Breast epithelium (tissue), 4 donors: ENCODE measurements at regions of chr1 and their contacts with region 1.

Region 1: DNA sequence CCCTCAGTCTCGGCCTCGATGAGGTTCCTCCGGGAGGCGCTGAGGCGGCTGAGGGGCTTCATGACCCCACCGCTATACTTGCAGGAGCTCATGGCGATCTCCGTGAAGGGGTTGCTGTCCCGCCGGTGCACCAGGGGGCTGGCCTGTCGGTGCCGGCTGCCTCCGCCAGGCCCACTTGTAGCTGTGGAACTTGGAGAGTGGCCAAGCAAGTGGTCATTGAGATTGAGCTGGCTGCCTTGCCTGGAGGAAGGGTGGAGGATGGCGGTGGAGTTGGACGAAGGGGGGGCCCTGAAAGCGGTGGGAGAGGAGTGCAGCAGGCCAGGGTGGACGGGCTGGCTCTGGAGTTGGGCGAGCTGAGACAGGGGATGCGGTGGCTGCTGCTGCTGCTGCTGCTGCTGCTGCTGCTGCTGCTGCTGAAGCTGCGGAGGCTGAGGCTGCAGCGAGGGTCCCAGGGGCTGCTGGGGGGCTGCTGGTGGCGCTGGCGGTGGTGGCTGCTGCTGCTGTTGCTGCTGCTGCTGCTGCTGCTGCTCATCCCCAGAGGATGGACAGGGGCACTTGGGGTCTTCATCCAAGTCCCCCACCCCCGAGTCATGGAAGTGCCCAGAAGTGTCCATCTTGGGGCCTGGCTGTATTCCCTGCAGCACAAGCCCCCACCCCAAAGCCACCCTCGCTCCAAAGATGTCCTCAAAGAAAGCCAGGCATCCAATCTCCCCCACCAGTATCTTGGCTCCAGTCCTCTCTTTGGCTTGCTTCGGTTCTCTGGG is 548 bp downstream of the KCNN3 start:
- DNase-seq: no peak
- H3K4me3 ChIP-seq: peak overlapping the region; percentile 30 to 53 (median 37)
- H3K27ac ChIP-seq: no peak overlapping the region
- H3K4me1 ChIP-seq: no peaks in the 10 kb centered on the region
- H3K27me3 ChIP-seq: peaks cover 0 to 23% of the 10 kb centered on the region in 2 donors
- CTCF ChIP-seq: no peak
- POLR2A ChIP-seq: no peak

Region 2: DNA sequence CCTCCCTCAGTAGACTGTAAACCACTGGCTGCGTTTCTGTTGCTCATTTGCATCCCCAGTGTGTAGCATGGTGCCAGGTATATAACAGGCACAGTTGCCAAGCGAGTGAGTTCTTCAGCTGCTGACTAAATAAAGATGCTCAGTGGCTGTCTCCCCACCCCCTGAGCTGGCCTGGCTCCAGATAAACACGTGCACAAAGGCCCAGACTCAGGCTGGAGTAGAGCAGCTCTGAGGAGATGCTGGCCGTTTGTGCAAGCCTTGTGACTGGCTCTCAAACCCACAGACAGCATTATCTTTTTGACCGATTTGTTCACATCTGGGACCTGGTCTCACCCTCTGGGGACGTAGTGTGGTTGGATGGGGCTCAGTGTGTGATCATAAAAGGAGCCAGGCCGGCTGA is 294.8 kb before region 1 on chr1:
- intact Hi-C with region 1: no loop called
- DNase-seq: no peak
- H3K4me3 ChIP-seq: no peak overlapping the region
- H3K27ac ChIP-seq: no peak overlapping the region
- H3K4me1 ChIP-seq: no peaks in the 10 kb centered on the region
- H3K27me3 ChIP-seq: no peaks in the 10 kb centered on the region
- CTCF ChIP-seq: no peak
- POLR2A ChIP-seq: no peak

Region 3: GRCh38 chr1:154843605-154844296 is 25.8 kb before region 1 on chr1:
- intact Hi-C with region 1: loop called (anchors 1 kb)
- DNase-seq: no peak
- H3K4me3 ChIP-seq: no peak overlapping the region
- H3K27ac ChIP-seq: no peak overlapping the region
- H3K4me1 ChIP-seq: no peaks in the 10 kb centered on the region
- H3K27me3 ChIP-seq: no peaks in the 10 kb centered on the region
- CTCF ChIP-seq: no peak
- POLR2A ChIP-seq: no peak